MCF 10A (cell line): ENCODE measurements at regions of chr2 and their contacts with region 1.

Region 1: DNA sequence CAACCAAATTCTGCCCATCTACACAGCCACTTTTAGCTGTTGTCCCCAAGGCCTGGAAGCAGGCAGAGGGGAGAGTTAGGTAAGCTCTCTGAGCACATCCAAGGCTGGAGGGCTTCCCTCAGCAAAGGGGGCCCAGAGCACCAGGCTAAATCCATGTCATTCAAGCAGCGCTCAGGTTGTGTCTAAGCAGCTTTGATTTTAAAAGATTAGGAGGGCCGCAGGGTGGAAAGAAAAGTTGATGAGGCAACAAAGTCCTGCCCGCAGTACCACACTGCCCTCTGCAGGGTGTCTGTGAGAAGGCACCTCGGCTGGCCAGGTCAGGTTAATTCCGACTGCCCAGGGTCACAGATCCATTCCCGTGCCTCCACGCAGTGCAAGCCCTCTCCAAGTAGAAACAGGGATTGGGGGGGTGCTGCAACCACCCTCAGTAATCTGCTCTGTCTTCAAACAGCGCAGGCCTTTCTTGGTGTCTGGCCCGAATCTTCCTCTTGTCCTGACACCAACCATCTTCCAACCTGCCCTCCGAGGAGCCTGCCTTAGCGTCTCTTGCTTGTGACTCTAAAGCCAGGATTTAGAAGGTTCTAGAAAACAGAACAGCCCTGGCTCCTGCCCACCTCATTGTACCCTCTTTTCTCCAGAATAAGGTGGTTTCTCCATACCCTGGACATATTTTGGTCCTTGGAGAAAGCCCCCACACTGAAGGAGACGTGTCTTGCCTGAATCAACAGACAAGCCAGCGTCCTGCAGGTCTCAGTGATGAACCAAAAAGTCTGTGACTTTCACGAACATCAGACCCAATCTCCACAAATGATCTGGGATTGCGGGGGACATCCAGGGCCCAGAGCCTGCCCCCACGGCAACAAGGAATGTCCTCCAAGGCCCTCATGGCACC is 289.2 kb downstream of the TNS1 start:
- DNase-seq: peak; percentile 71
- H3K4me3 Mint-ChIP-seq: no peak overlapping the region
- H3K27ac Mint-ChIP-seq: no peak overlapping the region
- H3K4me1 Mint-ChIP-seq: no peaks in the 10 kb centered on the region
- H3K27me3 Mint-ChIP-seq: peaks cover 22% of the 10 kb centered on the region
- CTCF ChIP-seq: peak; percentile 99

Region 2: DNA sequence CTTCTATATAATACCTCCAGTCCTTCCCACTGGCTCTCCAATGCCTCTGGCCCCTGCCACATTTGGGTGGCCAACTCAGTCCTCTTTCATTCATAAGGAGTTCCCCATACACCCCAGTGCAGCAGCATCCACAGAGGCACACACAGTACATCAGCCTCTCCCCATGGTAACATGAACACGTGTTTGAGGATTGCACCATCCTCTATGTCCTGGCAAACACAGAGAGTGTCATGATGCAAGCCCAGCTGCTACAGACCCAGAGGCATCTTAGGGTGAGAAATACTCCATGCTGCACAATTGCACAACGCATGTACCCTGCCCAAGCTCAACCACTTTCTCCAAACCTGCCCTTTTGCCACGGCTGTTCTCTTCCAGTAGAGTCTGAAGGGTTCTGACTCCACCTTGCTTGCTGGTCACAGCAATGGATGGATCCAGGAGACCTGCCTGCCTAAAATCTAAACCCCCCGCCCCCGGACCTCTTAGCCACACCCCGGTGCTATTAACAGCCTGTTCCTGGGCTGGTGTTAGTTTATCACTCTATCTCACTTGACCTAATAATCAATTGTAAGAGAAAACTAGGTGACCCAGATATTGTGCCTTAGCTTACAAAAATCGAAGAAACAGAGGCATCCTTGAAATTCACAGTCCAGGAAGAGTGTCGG is 1029.7 kb before region 1 on chr2:
- CTCF ChIA-PET with region 1: interaction called, 7 read pairs
- POLR2A ChIA-PET with region 1: no interaction called
- intact Hi-C with region 1: loop called (anchors 1 kb)
- DNase-seq: peak; percentile 99
- H3K4me3 Mint-ChIP-seq: no peak overlapping the region
- H3K27ac Mint-ChIP-seq: peak overlapping the region; percentile 93
- H3K4me1 Mint-ChIP-seq: peaks cover 32% of the 10 kb centered on the region
- H3K27me3 Mint-ChIP-seq: no peaks in the 10 kb centered on the region
- CTCF ChIP-seq: no peak

Region 3: DNA sequence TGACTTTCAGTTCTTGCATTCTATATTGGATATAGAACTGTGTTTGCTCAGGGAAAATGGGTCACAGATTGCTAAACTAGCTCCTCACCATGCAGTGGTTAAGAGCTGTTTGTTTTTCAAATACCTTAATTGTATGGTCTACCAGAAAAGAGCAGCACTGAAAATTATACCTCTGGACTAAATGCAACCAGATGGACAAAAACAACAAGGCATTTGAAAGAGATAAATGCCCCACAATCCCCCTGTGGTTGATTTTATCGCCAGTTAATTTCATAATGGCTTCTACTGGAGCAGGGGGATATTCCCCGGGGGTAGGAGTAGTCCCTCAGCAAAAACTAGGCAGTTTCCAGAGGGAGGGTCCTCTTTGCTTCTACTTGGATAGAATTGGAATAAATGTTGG is 585.9 kb before region 1 on chr2:
- CTCF ChIA-PET with region 1: no interaction called
- POLR2A ChIA-PET with region 1: no interaction called
- intact Hi-C with region 1: no loop called
- DNase-seq: no peak
- H3K4me3 Mint-ChIP-seq: no peak overlapping the region
- H3K27ac Mint-ChIP-seq: no peak overlapping the region
- H3K4me1 Mint-ChIP-seq: no peaks in the 10 kb centered on the region
- H3K27me3 Mint-ChIP-seq: peaks cover 30% of the 10 kb centered on the region
- CTCF ChIP-seq: no peak

Region 4: GRCh38 chr2:217142649-217143266 is 570.9 kb before region 1 on chr2:
- CTCF ChIA-PET with region 1: interaction called, 5 read pairs
- POLR2A ChIA-PET with region 1: no interaction called
- intact Hi-C with region 1: loop called (anchors 2 kb)
- DNase-seq: peak; percentile 55
- H3K4me3 Mint-ChIP-seq: no peak overlapping the region
- H3K27ac Mint-ChIP-seq: no peak overlapping the region
- H3K4me1 Mint-ChIP-seq: no peaks in the 10 kb centered on the region
- H3K27me3 Mint-ChIP-seq: peaks cover 8% of the 10 kb centered on the region
- CTCF ChIP-seq: peak; percentile 70

Region 5: GRCh38 chr2:217370391-217370790 is 343.2 kb before region 1 on chr2:
- CTCF ChIA-PET with region 1: interaction called, 5 read pairs
- POLR2A ChIA-PET with region 1: no interaction called
- intact Hi-C with region 1: loop called (anchors 1 kb)
- DNase-seq: peak; percentile 75
- H3K4me3 Mint-ChIP-seq: no peak overlapping the region
- H3K27ac Mint-ChIP-seq: no peak overlapping the region
- H3K4me1 Mint-ChIP-seq: peaks cover 12% of the 10 kb centered on the region
- H3K27me3 Mint-ChIP-seq: no peaks in the 10 kb centered on the region
- CTCF ChIP-seq: no peak

Region 6: DNA sequence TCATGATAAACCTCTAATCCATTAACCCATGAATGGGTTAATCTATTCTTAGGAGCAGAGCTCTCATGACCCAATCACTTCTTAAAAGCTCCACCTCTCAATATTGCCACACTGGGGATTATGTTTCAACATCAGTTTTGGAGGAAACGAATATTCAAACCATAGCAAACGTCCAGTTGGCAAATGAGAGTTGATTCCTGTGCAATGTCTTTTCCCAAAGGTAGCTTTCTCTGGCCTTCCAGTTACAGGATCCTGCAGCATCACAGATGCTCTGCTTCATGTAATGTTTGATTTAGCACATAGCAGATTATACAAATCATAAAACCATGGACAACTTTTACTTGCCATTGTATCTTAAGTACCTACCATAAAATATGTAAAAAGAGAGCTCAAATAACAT is 191.8 kb before region 1 on chr2:
- CTCF ChIA-PET with region 1: interaction called, 13 read pairs
- POLR2A ChIA-PET with region 1: no interaction called
- intact Hi-C with region 1: no loop called
- DNase-seq: peak; percentile 50
- H3K4me3 Mint-ChIP-seq: no peak overlapping the region
- H3K27ac Mint-ChIP-seq: no peak overlapping the region
- H3K4me1 Mint-ChIP-seq: no peaks in the 10 kb centered on the region
- H3K27me3 Mint-ChIP-seq: peaks cover 21% of the 10 kb centered on the region
- CTCF ChIP-seq: no peak

Region 7: GRCh38 chr2:217650716-217651360 is 62.8 kb before region 1 on chr2:
- CTCF ChIA-PET with region 1: interaction called, 92 read pairs
- POLR2A ChIA-PET with region 1: interaction called, 3 read pairs
- intact Hi-C with region 1: loop called (anchors 1 kb)
- DNase-seq: peak; percentile 77
- H3K4me3 Mint-ChIP-seq: no peak overlapping the region
- H3K27ac Mint-ChIP-seq: peak overlapping the region; percentile 3
- H3K4me1 Mint-ChIP-seq: peaks cover 13% of the 10 kb centered on the region
- H3K27me3 Mint-ChIP-seq: no peaks in the 10 kb centered on the region
- CTCF ChIP-seq: peak; percentile 69

Region 8: GRCh38 chr2:217785544-217786045 is 72.0 kb after region 1 on chr2:
- CTCF ChIA-PET with region 1: no interaction called
- POLR2A ChIA-PET with region 1: no interaction called
- intact Hi-C with region 1: no loop called
- DNase-seq: peak; percentile 62
- H3K4me3 Mint-ChIP-seq: no peak overlapping the region
- H3K27ac Mint-ChIP-seq: no peak overlapping the region
- H3K4me1 Mint-ChIP-seq: peaks cover 5% of the 10 kb centered on the region
- H3K27me3 Mint-ChIP-seq: peaks cover 16% of the 10 kb centered on the region
- CTCF ChIP-seq: peak; percentile 95